ENCODE measurements at regions of chr2 and their contacts with region 1.

Region 1: DNA sequence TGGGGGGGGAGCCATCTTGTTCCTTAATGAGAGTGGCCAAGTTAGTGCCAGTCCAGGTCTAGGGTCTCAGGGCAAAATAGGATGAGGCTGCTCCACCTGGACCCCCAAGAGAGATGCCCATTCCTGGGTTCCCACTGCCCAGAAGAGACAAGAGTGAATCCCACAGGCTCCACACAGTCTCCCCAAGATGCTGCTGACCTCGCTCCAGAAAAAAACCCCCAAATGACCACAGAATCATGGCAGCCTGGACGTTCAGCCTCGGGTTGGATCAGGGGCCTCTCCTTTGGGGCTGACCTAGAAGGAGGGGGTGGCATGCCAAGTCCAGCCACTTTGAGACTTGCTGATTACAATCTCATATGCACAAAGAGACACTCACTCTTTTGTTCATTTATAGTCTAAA is 25.1 kb downstream of the STAT1 start:
- DNase-seq: no peak
- H3K4me3 Mint-ChIP-seq: no peak overlapping the region
- H3K27ac Mint-ChIP-seq: no peak overlapping the region
- H3K4me1 Mint-ChIP-seq: peaks cover 52% of the 10 kb centered on the region
- H3K27me3 Mint-ChIP-seq: no peaks in the 10 kb centered on the region

Region 2: GRCh38 chr2:190974631-190975361 is 14.1 kb before region 1 on chr2:
- CTCF ChIA-PET with region 1: interaction called, 6 read pairs
- intact Hi-C with region 1: loop called (anchors 2 kb)
- DNase-seq: no peak
- H3K4me3 Mint-ChIP-seq: no peak overlapping the region
- H3K27ac Mint-ChIP-seq: peak overlapping the region; percentile 73
- H3K4me1 Mint-ChIP-seq: peaks cover 26% of the 10 kb centered on the region
- H3K27me3 Mint-ChIP-seq: no peaks in the 10 kb centered on the region

Region 3: DNA sequence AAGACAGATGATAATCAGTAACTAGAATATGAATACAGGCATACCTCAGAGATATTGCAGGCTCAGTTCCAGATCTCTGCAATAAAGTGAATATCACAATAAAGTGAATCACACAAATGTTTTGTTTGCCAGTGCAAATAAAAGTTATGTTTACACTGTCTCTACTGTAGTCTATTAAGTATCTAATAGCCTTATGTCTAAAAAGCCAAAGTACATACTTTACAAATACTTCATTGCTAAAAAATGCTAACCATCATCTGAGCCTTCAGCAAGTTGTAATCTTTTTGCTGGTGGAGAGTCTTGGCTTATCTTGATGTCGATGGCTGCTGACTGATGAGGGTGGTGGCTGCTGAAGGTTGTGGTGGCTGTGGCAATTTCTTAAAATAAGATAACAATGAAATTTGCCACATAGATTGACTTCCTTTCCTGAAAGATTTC is 415.7 kb after region 1 on chr2:
- CTCF ChIA-PET with region 1: no interaction called
- intact Hi-C with region 1: no loop called
- DNase-seq: no peak
- H3K4me3 Mint-ChIP-seq: no peak overlapping the region
- H3K27ac Mint-ChIP-seq: no peak overlapping the region
- H3K4me1 Mint-ChIP-seq: no peaks in the 10 kb centered on the region
- H3K27me3 Mint-ChIP-seq: no peaks in the 10 kb centered on the region

Measured in activated naive CD4-positive, alpha-beta T cell treated with anti-CD3 and anti-CD28 coated beads for 36 hours (primary cell).